HCT116 (cell line): ENCODE measurements at regions of chr1 and their contacts with region 1.

Region 1: DNA sequence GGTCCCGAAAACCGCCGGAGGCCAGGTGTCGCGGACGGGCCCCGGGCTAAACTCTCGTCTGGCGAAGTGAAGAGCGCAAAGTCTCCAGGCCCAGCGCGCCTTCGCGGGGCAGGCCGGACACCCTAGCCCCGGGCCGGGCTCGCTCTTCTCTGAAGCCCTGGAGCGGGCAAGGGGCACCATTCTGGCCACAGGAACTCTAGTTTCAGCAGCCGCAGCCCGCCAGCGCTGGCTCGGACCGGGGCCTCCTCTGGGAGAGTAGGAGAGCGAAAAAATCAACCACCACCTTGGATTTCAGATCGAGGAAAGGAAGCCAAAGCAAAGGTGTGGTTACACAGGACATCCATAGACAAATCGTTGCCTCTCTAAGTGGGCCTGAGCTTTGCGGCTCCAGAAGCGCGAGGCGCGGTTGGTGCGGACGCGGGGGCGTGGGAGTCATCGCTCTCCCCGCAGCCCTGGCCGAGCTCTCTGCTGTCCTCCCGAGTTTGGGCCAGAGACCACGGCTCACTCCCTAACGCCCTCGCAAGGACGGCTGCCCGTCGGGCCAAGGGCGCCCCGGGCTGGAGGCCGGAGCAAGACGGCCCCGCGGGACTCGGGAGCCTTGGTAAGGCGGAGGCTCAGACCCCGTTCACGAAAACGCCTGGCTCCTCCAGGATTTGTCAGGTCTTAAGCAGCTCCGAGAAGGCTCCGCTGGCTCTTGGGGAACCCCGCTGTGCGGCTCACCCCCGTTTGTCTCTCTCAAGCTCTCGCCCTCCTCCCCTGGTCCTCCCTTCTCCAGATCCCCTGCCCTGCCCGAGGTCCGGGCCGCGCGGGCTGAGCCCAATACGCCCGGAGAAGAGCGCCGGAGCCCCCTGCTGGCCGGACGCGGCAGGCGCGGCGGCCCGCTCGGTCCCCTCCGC is 132.9 kb upstream of the DPYD start:
- DNase-seq: no peak
- ATAC-seq: peak; percentile 100
- H3K4me3 ChIP-seq: no peak overlapping the region
- H3K27ac ChIP-seq: no peak overlapping the region
- H3K4me1 ChIP-seq: no peaks in the 10 kb centered on the region
- H3K27me3 ChIP-seq: no peaks in the 10 kb centered on the region
- CTCF ChIP-seq: peak in 2 of 3 experiments; percentile 65 to 74; a peak in 4 of 6 replicates
- POLR2A ChIP-seq: no peak
- RAD21 ChIP-seq: peak; percentile 38

Region 2: DNA sequence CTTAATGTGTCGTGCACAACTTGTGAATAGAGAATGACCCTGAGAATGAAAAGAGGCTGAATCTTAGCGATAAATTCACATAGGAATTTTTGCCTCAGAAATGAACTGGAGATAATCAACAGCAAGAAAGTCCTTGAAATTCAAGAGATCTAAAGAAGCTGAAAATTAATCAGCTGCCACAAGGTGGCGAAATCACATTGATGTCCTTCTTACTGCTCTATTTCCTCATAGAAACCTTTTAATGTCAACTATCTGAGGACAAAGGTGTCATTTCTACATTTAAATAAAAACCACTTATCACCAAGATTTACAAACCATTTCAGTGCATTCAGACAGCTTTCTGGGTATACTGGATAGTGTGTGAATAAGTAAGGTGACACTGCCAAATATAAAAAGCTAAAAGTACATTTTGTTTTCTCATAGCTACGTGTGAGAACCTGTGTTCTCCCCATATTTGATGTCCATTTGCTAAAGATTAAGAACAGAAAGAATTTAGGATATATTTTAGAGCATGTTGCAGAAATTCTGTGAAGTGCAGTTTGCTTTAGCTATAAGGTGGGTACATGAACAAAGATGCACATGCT is 1817.5 kb before region 1 on chr1:
- CTCF ChIA-PET with region 1: no interaction called
- POLR2A ChIA-PET with region 1: no interaction called
- RAD21 ChIA-PET with region 1: no interaction called
- intact Hi-C with region 1: loop called (anchors 10 kb)
- DNase-seq: peak; percentile 43
- ATAC-seq: peak; percentile 59; the same call in 1 of the 2 replicates
- H3K4me3 ChIP-seq: no peak overlapping the region
- H3K27ac ChIP-seq: no peak overlapping the region
- H3K4me1 ChIP-seq: peaks cover 12 to 13% of the 10 kb centered on the region in 2 experiments; a peak in 3 of 4 replicates
- H3K27me3 ChIP-seq: no peaks in the 10 kb centered on the region
- CTCF ChIP-seq: peak; percentile 41 to 63 (median 52); a peak in 5 of 6 replicates
- POLR2A ChIP-seq: no peak
- RAD21 ChIP-seq: peak; percentile 75

Region 3: DNA sequence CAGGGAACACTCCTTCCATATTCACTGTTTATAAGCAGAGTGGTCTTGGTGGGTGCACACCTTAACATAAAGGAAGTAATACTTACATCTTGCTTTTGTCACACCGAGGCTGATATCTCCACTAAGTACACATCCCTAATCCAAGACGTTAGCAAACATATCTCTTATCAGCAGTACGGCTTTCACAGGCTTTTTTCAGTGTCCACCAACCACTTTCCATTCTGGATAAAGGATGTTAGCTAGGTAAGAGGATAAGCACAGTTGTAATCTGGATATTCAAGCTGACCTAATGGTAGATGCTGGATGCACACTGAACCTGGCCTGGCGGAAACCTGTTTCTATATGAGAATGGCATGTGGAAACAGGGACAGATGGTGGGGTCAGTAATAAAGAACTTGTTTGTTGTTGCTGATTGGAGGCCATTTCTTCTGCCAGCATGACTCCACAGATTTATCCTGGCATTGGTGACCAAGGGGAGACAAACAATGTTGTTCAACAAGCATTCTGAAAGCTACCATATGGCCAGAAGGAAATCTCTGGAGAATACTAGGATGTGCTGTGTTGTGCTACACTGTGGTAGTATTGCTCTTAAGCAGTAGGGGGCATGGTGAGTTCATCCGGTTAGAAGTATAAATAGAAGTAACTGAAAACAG is 915.7 kb before region 1 on chr1:
- CTCF ChIA-PET with region 1: no interaction called
- POLR2A ChIA-PET with region 1: no interaction called
- RAD21 ChIA-PET with region 1: no interaction called
- intact Hi-C with region 1: loop called (anchors 2 kb)
- DNase-seq: peak; percentile 37
- ATAC-seq: peak; percentile 99
- H3K4me3 ChIP-seq: peak overlapping the region in 1 of 2 experiments; percentile 8; a peak in 1 of 4 replicates
- H3K27ac ChIP-seq: no peak overlapping the region
- H3K4me1 ChIP-seq: peaks cover 5 to 10% of the 10 kb centered on the region in 2 experiments; a peak in 3 of 4 replicates
- H3K27me3 ChIP-seq: no peaks in the 10 kb centered on the region
- CTCF ChIP-seq: peak; percentile 42 to 76 (median 63); a peak in 5 of 6 replicates
- POLR2A ChIP-seq: no peak
- RAD21 ChIP-seq: peak; percentile 69

Region 4: DNA sequence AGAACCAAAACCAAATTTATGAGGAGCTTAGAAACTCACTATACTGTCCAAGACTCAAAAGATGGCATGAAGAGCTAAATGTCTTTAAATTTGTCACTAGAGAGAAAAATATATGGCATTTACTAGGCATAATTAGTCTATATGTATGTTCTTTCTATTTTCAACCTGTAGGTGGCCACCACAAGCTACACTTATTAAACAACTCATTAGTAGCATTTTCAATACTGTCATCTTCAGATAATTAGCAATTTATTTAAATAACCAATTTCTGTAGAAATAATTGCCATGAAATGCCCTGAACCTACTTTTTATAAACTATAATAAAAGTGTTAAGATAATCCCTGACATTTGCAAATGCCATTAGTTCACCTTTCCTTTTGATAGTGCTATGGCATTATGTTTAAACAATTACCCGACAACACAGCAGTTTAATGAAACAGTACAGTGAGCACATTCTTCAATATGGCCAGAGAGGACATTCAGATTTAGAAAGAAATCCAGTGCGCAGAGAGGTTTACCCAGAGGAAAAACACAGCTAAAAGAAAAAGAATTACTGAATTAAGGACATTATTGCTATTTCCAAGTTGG is 809.7 kb before region 1 on chr1:
- CTCF ChIA-PET with region 1: no interaction called
- POLR2A ChIA-PET with region 1: no interaction called
- RAD21 ChIA-PET with region 1: no interaction called
- intact Hi-C with region 1: loop called (anchors 2 kb)
- DNase-seq: peak; percentile 12
- ATAC-seq: 0 out of 2 replicates have a peak, but pooled peaks have one; percentile 52
- H3K4me3 ChIP-seq: no peak overlapping the region
- H3K27ac ChIP-seq: no peak overlapping the region
- H3K4me1 ChIP-seq: no peaks in the 10 kb centered on the region
- H3K27me3 ChIP-seq: no peaks in the 10 kb centered on the region
- CTCF ChIP-seq: peak; percentile 38 to 62 (median 55); a peak in 5 of 6 replicates
- POLR2A ChIP-seq: no peak
- RAD21 ChIP-seq: peak; percentile 71

Region 5: GRCh38 chr1:97581614-97582051 is 472.1 kb before region 1 on chr1:
- CTCF ChIA-PET with region 1: no interaction called
- POLR2A ChIA-PET with region 1: no interaction called
- RAD21 ChIA-PET with region 1: no interaction called
- intact Hi-C with region 1: no loop called
- DNase-seq: no peak
- ATAC-seq: peak; percentile 52; the same call in 1 of the 2 replicates
- H3K4me3 ChIP-seq: no peak overlapping the region
- H3K27ac ChIP-seq: no peak overlapping the region
- H3K4me1 ChIP-seq: peaks cover 0 to 11% of the 10 kb centered on the region in 2 experiments; a peak in 1 of 4 replicates
- H3K27me3 ChIP-seq: no peaks in the 10 kb centered on the region
- CTCF ChIP-seq: no peak
- POLR2A ChIP-seq: no peak
- RAD21 ChIP-seq: no peak

Region 6: GRCh38 chr1:97685360-97685759 is 368.4 kb before region 1 on chr1:
- CTCF ChIA-PET with region 1: no interaction called
- POLR2A ChIA-PET with region 1: no interaction called
- RAD21 ChIA-PET with region 1: no interaction called
- intact Hi-C with region 1: no loop called
- DNase-seq: no peak
- ATAC-seq: no peak
- H3K4me3 ChIP-seq: no peak overlapping the region
- H3K27ac ChIP-seq: no peak overlapping the region
- H3K4me1 ChIP-seq: no peaks in the 10 kb centered on the region
- H3K27me3 ChIP-seq: no peaks in the 10 kb centered on the region
- CTCF ChIP-seq: no peak
- POLR2A ChIP-seq: no peak
- RAD21 ChIP-seq: no peak

Region 7: GRCh38 chr1:97820470-97821188 is 233.1 kb before region 1 on chr1:
- CTCF ChIA-PET with region 1: no interaction called
- POLR2A ChIA-PET with region 1: no interaction called
- RAD21 ChIA-PET with region 1: no interaction called
- intact Hi-C with region 1: loop called (anchors 5 kb)
- DNase-seq: peak; percentile 29
- ATAC-seq: peak; percentile 72
- H3K4me3 ChIP-seq: no peak overlapping the region
- H3K27ac ChIP-seq: no peak overlapping the region
- H3K4me1 ChIP-seq: no peaks in the 10 kb centered on the region
- H3K27me3 ChIP-seq: no peaks in the 10 kb centered on the region
- CTCF ChIP-seq: peak; percentile 30 to 67 (median 38); a peak in 5 of 6 replicates
- POLR2A ChIP-seq: no peak
- RAD21 ChIP-seq: peak; percentile 73

Region 8: DNA sequence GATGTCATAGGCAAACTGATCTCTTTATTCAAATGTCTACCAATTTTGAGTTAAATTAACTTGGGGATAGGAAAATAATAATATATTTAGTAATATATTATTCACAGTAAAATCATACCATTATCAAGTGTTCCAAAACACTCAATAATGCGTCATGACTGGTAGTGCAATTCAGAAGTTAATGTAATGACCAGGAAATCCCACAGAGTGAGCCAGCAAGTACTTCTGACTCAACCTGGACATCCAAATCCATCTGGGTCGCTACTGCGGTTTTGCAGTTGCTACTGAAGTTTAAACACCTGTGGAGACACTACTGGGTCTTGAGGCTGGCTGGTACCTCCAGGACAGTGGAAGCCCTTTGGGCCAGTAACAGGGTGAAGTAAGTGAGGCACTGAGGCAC is 177.7 kb before region 1 on chr1:
- CTCF ChIA-PET with region 1: no interaction called
- POLR2A ChIA-PET with region 1: no interaction called
- RAD21 ChIA-PET with region 1: no interaction called
- intact Hi-C with region 1: no loop called
- DNase-seq: no peak
- ATAC-seq: no peak
- H3K4me3 ChIP-seq: no peak overlapping the region
- H3K27ac ChIP-seq: no peak overlapping the region
- H3K4me1 ChIP-seq: no peaks in the 10 kb centered on the region
- H3K27me3 ChIP-seq: no peaks in the 10 kb centered on the region
- CTCF ChIP-seq: no peak
- POLR2A ChIP-seq: no peak
- RAD21 ChIP-seq: no peak